ENCODE measurements at regions of chr11 and their contacts with region 1.

Region 1: GRCh38 chr11:47373876-47374720 is 4.2 kb downstream of the SPI1 start:
- DNase-seq: peak; percentile 86
- H3K4me3 Mint-ChIP-seq: no peak overlapping the region
- H3K27ac Mint-ChIP-seq: no peak overlapping the region
- H3K4me1 Mint-ChIP-seq: peaks cover 13% of the 10 kb centered on the region
- H3K27me3 Mint-ChIP-seq: no peaks in the 10 kb centered on the region

Region 2: GRCh38 chr11:47296045-47296444 is 78.1 kb before region 1 on chr11:
- CTCF ChIA-PET with region 1: no interaction called
- POLR2A ChIA-PET with region 1: no interaction called
- DNase-seq: no peak
- H3K4me3 Mint-ChIP-seq: no peak overlapping the region
- H3K27ac Mint-ChIP-seq: no peak overlapping the region
- H3K4me1 Mint-ChIP-seq: peaks cover 4% of the 10 kb centered on the region
- H3K27me3 Mint-ChIP-seq: no peaks in the 10 kb centered on the region

Region 3: DNA sequence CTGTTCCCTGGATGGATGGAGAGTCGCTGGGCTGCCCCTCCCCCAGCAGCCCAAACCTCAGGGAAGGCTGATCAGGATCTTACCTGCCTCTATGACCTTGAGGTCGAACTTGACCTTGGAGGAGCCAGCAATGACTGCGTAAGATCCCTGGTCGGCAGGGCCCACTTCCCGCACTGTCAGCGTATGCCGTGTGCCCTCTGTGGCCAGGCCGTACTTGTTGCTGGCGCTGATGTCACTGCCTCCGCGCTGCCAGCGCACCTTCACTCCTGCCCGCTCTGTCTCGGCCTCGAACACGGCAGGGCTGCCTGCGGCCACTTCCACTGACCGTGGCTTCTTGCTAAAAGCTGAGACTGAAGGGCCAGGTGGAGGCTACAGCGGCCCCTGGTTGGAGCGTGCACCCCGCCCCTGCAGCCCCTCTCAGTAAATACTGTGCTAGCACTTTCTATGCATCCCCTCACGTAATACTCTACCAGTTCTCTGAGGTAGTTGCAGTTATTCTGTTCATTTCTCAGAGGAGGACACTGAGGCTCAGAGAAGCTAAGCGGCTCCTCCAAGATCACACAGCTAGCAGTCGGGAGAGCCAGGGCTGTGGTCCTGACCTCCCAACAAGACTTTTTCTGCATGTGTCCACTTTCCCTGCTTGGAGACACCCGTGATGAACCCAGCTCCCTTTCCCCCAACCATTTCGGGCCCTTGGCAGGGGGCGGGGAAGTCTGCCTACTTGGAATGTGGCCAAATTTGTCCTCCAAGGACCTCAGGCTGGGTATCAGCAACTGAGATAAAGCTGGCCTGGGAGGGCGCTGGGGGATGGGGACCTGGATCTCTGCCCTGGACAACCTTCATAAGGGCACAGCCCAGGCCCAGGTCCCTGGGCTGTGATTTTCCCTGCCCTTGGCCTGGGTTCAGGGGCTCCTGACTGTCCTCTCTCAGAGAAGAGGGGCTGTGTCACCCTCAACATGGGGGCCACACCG is 22.7 kb before region 1 on chr11:
- CTCF ChIA-PET with region 1: interaction called, 10 read pairs
- POLR2A ChIA-PET with region 1: no interaction called
- DNase-seq: no peak
- H3K4me3 Mint-ChIP-seq: no peak overlapping the region
- H3K27ac Mint-ChIP-seq: no peak overlapping the region
- H3K4me1 Mint-ChIP-seq: no peaks in the 10 kb centered on the region
- H3K27me3 Mint-ChIP-seq: no peaks in the 10 kb centered on the region

Region 4: DNA sequence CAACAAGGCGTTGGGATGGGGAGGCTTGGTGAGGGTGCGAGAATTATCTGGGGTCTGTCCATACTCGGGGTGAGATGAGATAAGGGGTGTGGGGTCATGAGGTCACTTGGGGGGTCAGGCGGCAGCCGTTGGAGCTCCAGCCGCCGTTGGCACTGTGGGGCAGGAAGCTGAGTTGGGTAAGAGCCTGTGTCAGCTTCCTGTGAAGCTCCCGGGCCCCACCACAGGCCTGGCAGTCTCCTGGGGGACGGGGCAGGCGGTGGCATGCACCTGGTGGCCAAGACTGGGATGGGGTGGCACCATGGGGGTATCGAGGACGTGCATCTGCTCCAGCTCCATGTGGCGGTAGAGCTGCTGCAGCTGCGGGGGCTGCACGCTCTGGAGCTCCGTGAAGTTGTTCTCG is 14.5 kb before region 1 on chr11:
- CTCF ChIA-PET with region 1: interaction called, 13 read pairs
- POLR2A ChIA-PET with region 1: no interaction called
- DNase-seq: no peak
- H3K4me3 Mint-ChIP-seq: no peak overlapping the region
- H3K27ac Mint-ChIP-seq: peak overlapping the region; percentile 47
- H3K4me1 Mint-ChIP-seq: peaks cover 12% of the 10 kb centered on the region
- H3K27me3 Mint-ChIP-seq: no peaks in the 10 kb centered on the region

Region 5: GRCh38 chr11:47393150-47394049 is 19.3 kb after region 1 on chr11:
- CTCF ChIA-PET with region 1: interaction called, 29 read pairs
- POLR2A ChIA-PET with region 1: interaction called, 3 read pairs
- DNase-seq: no peak
- H3K4me3 Mint-ChIP-seq: no peak overlapping the region
- H3K27ac Mint-ChIP-seq: peak overlapping the region; percentile 94
- H3K4me1 Mint-ChIP-seq: peaks cover 51% of the 10 kb centered on the region
- H3K27me3 Mint-ChIP-seq: no peaks in the 10 kb centered on the region

Region 6: DNA sequence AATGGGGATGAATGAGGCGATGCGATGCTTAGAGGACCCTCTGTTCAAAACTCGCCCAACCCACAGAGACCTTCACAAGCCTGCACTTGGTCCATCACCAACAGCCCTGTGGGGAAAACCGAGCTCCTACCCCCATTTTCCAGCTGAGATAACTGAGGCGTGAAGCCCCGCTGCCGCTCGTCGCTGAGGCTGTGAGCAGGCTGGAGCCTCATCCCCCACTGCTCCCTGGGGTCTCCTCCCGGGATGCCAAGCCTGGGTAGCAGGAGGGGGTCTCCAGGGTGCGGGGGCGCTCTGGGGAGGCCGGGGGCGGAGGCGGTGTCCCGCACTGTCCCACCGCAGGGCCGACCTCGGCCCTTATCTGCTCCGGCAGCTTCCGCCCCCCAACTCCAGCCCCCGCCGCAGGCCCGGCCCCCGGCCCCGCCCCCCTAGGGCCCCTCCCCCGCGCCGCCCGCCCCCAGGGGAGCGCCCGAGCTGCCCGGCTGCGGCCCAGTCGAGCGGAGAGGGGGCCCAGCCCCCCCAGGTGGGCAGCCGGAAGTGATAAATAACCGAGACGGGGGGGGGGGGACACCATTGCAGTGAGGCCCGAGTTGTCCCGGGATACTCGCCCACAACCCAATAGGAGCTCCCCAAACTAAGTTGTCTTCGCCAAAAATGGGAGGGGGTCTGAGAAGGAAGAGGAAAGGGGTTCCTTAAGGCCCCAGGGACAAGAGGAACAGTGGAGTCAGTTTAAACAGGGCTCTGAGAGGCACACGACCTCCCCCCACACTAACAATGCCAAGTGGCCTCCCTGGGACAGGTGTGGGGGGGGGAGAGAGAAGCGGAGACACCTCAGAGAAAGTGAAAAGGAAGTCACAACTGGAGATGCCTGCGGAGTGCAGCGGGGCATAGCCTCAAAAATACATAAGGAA is 26.0 kb after region 1 on chr11:
- CTCF ChIA-PET with region 1: interaction called, 10 read pairs
- POLR2A ChIA-PET with region 1: no interaction called
- DNase-seq: peak; percentile 31
- H3K4me3 Mint-ChIP-seq: peak overlapping the region; percentile 72
- H3K27ac Mint-ChIP-seq: peak overlapping the region; percentile 72
- H3K4me1 Mint-ChIP-seq: peaks cover 28% of the 10 kb centered on the region
- H3K27me3 Mint-ChIP-seq: no peaks in the 10 kb centered on the region

Region 7: GRCh38 chr11:47411884-47412746 is 38.0 kb after region 1 on chr11:
- CTCF ChIA-PET with region 1: interaction called, 20 read pairs
- POLR2A ChIA-PET with region 1: no interaction called
- DNase-seq: peak; percentile 66
- H3K4me3 Mint-ChIP-seq: no peak overlapping the region
- H3K27ac Mint-ChIP-seq: no peak overlapping the region
- H3K4me1 Mint-ChIP-seq: peaks cover 13% of the 10 kb centered on the region
- H3K27me3 Mint-ChIP-seq: no peaks in the 10 kb centered on the region